Activated CD4-positive, alpha-beta memory T cell treated with anti-CD3 and anti-CD28 coated beads for 36 hours (primary cell): ENCODE measurements at regions of chr7 and their contacts with region 1.

Region 1: GRCh38 chr7:97016381-97017191 is 8.0 kb downstream of the DLX5 start:
- DNase-seq: no peak
- H3K4me3 Mint-ChIP-seq: no peak overlapping the region
- H3K27ac Mint-ChIP-seq: no peak overlapping the region
- H3K4me1 Mint-ChIP-seq: peaks cover 20% of the 10 kb centered on the region
- H3K27me3 Mint-ChIP-seq: peaks cover 89% of the 10 kb centered on the region

Region 2: GRCh38 chr7:97006036-97006815 is 10.4 kb before region 1 on chr7:
- CTCF ChIA-PET with region 1: interaction called, 4 read pairs
- POLR2A ChIA-PET with region 1: no interaction called
- intact Hi-C with region 1: loop called (anchors 1 kb)
- DNase-seq: peak; percentile 51
- H3K4me3 Mint-ChIP-seq: peak overlapping the region; percentile 67
- H3K27ac Mint-ChIP-seq: no peak overlapping the region
- H3K4me1 Mint-ChIP-seq: peaks cover 20% of the 10 kb centered on the region
- H3K27me3 Mint-ChIP-seq: peaks cover 81% of the 10 kb centered on the region